ENCODE measurements at regions of chr7 and their contacts with region 1.

Region 1: DNA sequence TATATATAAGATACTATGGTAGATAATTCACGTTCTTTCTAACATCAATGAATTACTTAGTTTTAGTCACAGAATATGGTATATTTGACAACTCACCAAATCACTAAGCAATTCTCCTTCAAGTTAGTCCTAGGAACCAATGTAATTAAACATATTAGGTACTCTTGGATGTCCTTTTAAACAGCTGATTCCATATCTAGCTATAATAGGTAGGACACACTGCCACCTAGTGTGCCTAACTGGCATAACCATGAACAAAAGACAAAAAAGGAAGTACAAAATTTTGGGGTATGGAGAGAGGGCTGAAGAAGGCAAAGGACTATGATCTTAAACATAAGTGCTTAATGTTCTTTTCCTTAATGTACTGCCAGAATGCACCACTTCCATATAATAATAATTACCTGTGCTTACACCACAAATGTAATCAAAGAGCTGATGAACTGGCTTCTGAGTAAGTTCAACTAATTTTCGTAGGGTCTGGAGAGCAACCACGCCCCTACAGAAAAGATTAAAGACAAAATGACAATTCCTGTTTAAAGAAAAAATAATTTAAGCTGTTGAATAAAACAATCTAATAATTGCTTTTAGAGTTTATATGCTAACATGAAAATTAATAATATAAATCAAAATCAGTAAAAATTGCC is 28.7 kb downstream of the PNPLA8 start:
- DNase-seq: peak in 1 of 2 experiments; percentile 70
- H3K4me3 ChIP-seq: no peak overlapping the region
- H3K4me3 Mint-ChIP-seq: no peak overlapping the region
- H3K27ac Mint-ChIP-seq: no peak overlapping the region
- H3K4me1 ChIP-seq: no peaks in the 10 kb centered on the region
- H3K4me1 Mint-ChIP-seq: no peaks in the 10 kb centered on the region
- H3K27me3 ChIP-seq: no peaks in the 10 kb centered on the region
- H3K27me3 Mint-ChIP-seq: no peaks in the 10 kb centered on the region
- CTCF ChIP-seq: peak; percentile 73 to 77

Region 2: DNA sequence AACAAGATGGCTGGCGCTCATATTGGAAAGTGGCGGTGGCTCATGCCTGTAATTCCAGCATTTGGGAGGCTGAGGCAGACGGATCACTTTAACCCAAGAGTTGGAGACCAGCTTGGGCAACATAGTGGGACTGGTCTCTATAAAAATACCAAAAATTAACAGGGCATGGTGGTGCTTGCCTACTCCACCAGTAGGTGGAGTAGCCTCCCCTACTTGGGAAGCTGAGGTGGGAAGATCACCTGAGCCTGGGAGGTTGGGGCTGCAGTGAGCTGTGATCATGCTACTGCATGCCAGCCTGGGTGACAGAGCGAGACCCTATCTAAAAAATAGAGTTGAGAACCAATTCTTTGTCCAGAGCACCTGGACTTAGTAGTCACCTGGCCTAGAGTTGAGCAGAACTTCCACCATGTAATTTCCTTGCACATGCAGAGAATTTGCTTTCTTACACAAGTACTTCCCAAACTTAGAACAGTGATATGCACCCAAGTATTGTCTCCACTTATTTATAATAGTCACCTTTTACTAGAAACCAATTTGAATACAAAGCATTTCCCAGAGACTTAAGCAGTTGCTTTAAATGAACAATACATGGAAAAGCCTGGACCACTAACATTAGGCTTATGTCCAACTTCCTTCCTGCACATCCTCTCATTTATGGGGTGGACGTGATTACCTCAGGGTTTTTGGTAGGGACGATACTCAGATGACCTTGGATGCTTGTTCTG is 382.9 kb before region 1 on chr7:
- CTCF ChIA-PET with region 1: interaction called, 7 read pairs
- POLR2A ChIA-PET with region 1: no interaction called
- intact Hi-C with region 1: loop called (anchors 1 kb)
- DNase-seq: peak; percentile 60 to 67
- H3K4me3 ChIP-seq: no peak overlapping the region
- H3K4me3 Mint-ChIP-seq: no peak overlapping the region
- H3K27ac Mint-ChIP-seq: no peak overlapping the region
- H3K4me1 ChIP-seq: peaks cover 3% of the 10 kb centered on the region
- H3K4me1 Mint-ChIP-seq: peaks cover 4% of the 10 kb centered on the region
- H3K27me3 ChIP-seq: no peaks in the 10 kb centered on the region
- H3K27me3 Mint-ChIP-seq: no peaks in the 10 kb centered on the region
- CTCF ChIP-seq: peak; percentile 79 to 80

Region 3: GRCh38 chr7:108181073-108181985 is 315.9 kb before region 1 on chr7:
- CTCF ChIA-PET with region 1: interaction called, 4 read pairs
- POLR2A ChIA-PET with region 1: no interaction called
- intact Hi-C with region 1: loop called (anchors 1 kb)
- DNase-seq: peak in 1 of 2 experiments; percentile 71
- H3K4me3 ChIP-seq: no peak overlapping the region
- H3K4me3 Mint-ChIP-seq: no peak overlapping the region
- H3K27ac Mint-ChIP-seq: no peak overlapping the region
- H3K4me1 ChIP-seq: peaks cover 4% of the 10 kb centered on the region; the same call in 1 of the 2 replicates
- H3K4me1 Mint-ChIP-seq: no peaks in the 10 kb centered on the region
- H3K27me3 ChIP-seq: no peaks in the 10 kb centered on the region
- H3K27me3 Mint-ChIP-seq: no peaks in the 10 kb centered on the region
- CTCF ChIP-seq: peak; percentile 62 to 80

Region 4: GRCh38 chr7:108459931-108460551 is 37.2 kb before region 1 on chr7:
- CTCF ChIA-PET with region 1: interaction called, 3 read pairs
- POLR2A ChIA-PET with region 1: no interaction called
- intact Hi-C with region 1: loop called (anchors 1 kb)
- DNase-seq: peak in 1 of 2 experiments; percentile 68
- H3K4me3 ChIP-seq: no peak overlapping the region
- H3K4me3 Mint-ChIP-seq: no peak overlapping the region
- H3K27ac Mint-ChIP-seq: no peak overlapping the region
- H3K4me1 ChIP-seq: 0 out of 2 replicates have a peak, but pooled peaks cover 3% of the 10 kb centered on the region
- H3K4me1 Mint-ChIP-seq: peaks cover 17% of the 10 kb centered on the region
- H3K27me3 ChIP-seq: no peaks in the 10 kb centered on the region
- H3K27me3 Mint-ChIP-seq: no peaks in the 10 kb centered on the region
- CTCF ChIP-seq: peak; percentile 65 to 69

Region 5: DNA sequence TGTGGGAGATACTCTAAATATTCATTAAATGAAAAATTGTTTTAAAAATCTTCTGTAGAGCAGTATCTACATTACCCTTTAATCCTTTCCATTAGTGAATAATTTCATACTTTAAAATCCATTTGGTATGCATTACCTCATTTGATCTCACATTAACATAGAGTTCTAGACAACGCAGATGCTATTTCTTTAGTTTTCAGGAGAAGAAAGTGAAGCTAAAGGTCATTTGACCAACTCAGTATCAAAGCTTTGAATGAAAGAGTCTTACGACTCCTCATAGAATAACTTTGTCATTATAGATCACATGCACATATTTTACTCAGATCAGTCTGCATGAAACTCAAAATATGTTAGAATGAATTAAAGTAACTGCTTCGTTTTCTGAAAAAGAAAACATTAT is 532.7 kb after region 1 on chr7:
- CTCF ChIA-PET with region 1: no interaction called
- POLR2A ChIA-PET with region 1: no interaction called
- intact Hi-C with region 1: no loop called
- DNase-seq: no peak
- H3K4me3 ChIP-seq: no peak overlapping the region
- H3K4me3 Mint-ChIP-seq: no peak overlapping the region
- H3K27ac Mint-ChIP-seq: no peak overlapping the region
- H3K4me1 ChIP-seq: no peaks in the 10 kb centered on the region
- H3K4me1 Mint-ChIP-seq: no peaks in the 10 kb centered on the region
- H3K27me3 ChIP-seq: no peaks in the 10 kb centered on the region
- H3K27me3 Mint-ChIP-seq: no peaks in the 10 kb centered on the region
- CTCF ChIP-seq: no peak

Measured in Caco-2 (cell line).